ENCODE measurements at regions of chr3 and their contacts with region 1.

Region 1: DNA sequence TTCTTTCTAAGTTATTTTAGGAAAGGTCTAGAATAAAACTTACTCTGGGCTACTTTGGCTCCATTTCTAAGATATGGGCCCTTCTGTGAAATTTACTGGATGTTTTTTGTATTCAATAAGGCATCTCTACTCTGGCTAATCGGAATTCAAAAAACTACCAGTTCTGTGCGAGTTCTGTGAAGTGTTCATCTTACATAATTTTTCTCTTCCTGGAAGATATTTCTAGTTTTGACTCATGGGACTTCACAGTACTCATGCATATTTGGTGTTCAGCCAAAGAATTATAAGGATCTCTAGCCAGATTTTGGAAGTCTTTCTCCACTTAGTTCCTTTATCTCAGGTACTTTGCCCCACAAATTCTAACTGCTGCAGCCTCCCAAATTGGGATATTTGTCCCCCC is 46.4 kb upstream of the MBNL1 start:
- DNase-seq: no peak
- H3K4me3 Mint-ChIP-seq: peak overlapping the region; percentile 71
- H3K27ac Mint-ChIP-seq: peak overlapping the region; percentile 98
- H3K4me1 Mint-ChIP-seq: peaks cover 81% of the 10 kb centered on the region
- H3K27me3 Mint-ChIP-seq: no peaks in the 10 kb centered on the region

Region 2: GRCh38 chr3:151816091-151816604 is 406.2 kb before region 1 on chr3:
- CTCF ChIA-PET with region 1: no interaction called
- intact Hi-C with region 1: no loop called
- DNase-seq: no peak
- H3K4me3 Mint-ChIP-seq: no peak overlapping the region
- H3K27ac Mint-ChIP-seq: no peak overlapping the region
- H3K4me1 Mint-ChIP-seq: no peaks in the 10 kb centered on the region
- H3K27me3 Mint-ChIP-seq: no peaks in the 10 kb centered on the region

Region 3: GRCh38 chr3:152087153-152087552 is 135.2 kb before region 1 on chr3:
- CTCF ChIA-PET with region 1: no interaction called
- intact Hi-C with region 1: no loop called
- DNase-seq: no peak
- H3K4me3 Mint-ChIP-seq: no peak overlapping the region
- H3K27ac Mint-ChIP-seq: no peak overlapping the region
- H3K4me1 Mint-ChIP-seq: peaks cover 3% of the 10 kb centered on the region
- H3K27me3 Mint-ChIP-seq: peaks cover 2% of the 10 kb centered on the region

Region 4: GRCh38 chr3:152205097-152205593 is 17.2 kb before region 1 on chr3:
- CTCF ChIA-PET with region 1: interaction called, 5 read pairs
- intact Hi-C with region 1: loop called (anchors 1 kb)
- DNase-seq: no peak
- H3K4me3 Mint-ChIP-seq: peak overlapping the region; percentile 89
- H3K27ac Mint-ChIP-seq: peak overlapping the region; percentile 99
- H3K4me1 Mint-ChIP-seq: peaks cover 67% of the 10 kb centered on the region
- H3K27me3 Mint-ChIP-seq: no peaks in the 10 kb centered on the region

Region 5: GRCh38 chr3:152254041-152254440 is 31.7 kb after region 1 on chr3:
- CTCF ChIA-PET with region 1: no interaction called
- intact Hi-C with region 1: no loop called
- DNase-seq: no peak
- H3K4me3 Mint-ChIP-seq: peak overlapping the region; percentile 51
- H3K27ac Mint-ChIP-seq: peak overlapping the region; percentile 83
- H3K4me1 Mint-ChIP-seq: peaks cover 78% of the 10 kb centered on the region
- H3K27me3 Mint-ChIP-seq: no peaks in the 10 kb centered on the region

Region 6: GRCh38 chr3:153080778-153081240 is 858.5 kb after region 1 on chr3:
- CTCF ChIA-PET with region 1: no interaction called
- intact Hi-C with region 1: no loop called
- DNase-seq: no peak
- H3K4me3 Mint-ChIP-seq: no peak overlapping the region
- H3K27ac Mint-ChIP-seq: no peak overlapping the region
- H3K4me1 Mint-ChIP-seq: no peaks in the 10 kb centered on the region
- H3K27me3 Mint-ChIP-seq: no peaks in the 10 kb centered on the region

Measured in activated naive CD4-positive, alpha-beta T cell treated with anti-CD3 and anti-CD28 coated beads for 36 hours (primary cell).